ENCODE measurements at regions of chr7 and their contacts with region 1.

Region 1: GRCh38 chr7:13904007-13904406 is 85.5 kb downstream of the ETV1 start:
- DNase-seq: no peak
- H3K4me3 ChIP-seq: no peak overlapping the region
- H3K27ac ChIP-seq: no peak overlapping the region
- H3K4me1 ChIP-seq: no peaks in the 10 kb centered on the region
- H3K27me3 ChIP-seq: no peaks in the 10 kb centered on the region
- CTCF ChIP-seq: no peak
- POLR2A ChIP-seq: no peak

Region 2: DNA sequence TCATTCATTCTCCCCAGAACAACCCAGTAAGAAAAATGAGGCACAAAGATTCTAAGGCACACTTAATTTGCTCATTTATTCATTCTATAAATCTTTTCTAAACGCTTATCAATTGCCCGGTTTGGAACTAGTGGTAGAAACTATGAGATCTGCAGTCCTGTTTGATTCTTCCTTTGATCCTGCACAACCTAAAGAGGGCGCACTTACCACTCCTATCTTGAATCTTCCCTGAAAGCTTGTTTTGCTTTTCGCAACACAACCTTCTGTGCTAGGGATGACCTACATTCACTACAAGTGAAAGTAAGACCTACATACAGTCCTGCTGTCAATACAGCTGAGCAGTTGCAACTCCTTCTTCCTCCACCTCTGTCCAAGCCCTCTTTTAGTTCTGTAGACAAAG is 1229.2 kb before region 1 on chr7:
- intact Hi-C with region 1: loop called (anchors 5 kb)
- DNase-seq: no peak
- H3K4me3 ChIP-seq: no peak overlapping the region
- H3K27ac ChIP-seq: no peak overlapping the region
- H3K4me1 ChIP-seq: no peaks in the 10 kb centered on the region
- H3K27me3 ChIP-seq: no peaks in the 10 kb centered on the region
- CTCF ChIP-seq: peak in 1 of 3 donors; percentile 13
- POLR2A ChIP-seq: no peak

Region 3: DNA sequence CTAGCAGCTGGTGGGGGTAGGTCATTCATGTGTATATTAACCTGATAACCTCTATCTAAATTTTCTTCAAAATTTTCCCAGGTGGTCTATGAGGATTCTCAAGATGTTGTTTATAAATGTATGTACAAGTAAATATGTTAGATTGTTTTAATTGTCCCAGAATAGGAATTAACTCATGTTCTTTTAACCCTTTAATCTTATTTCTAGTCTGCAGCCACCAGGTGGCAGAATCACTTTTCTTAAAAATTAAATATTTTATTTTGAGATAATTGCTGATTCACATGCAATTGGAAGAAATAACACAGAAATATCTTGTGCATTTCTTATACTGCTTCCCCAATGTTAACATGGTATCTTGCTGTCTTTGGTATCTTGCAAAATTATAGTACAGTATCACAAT is 627.0 kb before region 1 on chr7:
- intact Hi-C with region 1: no loop called
- DNase-seq: no peak
- H3K4me3 ChIP-seq: no peak overlapping the region
- H3K27ac ChIP-seq: no peak overlapping the region
- H3K4me1 ChIP-seq: no peaks in the 10 kb centered on the region
- H3K27me3 ChIP-seq: no peaks in the 10 kb centered on the region
- CTCF ChIP-seq: no peak
- POLR2A ChIP-seq: no peak

Region 4: GRCh38 chr7:15389073-15389472 is 1485.1 kb after region 1 on chr7:
- intact Hi-C with region 1: no loop called
- DNase-seq: no peak
- H3K4me3 ChIP-seq: no peak overlapping the region
- H3K27ac ChIP-seq: no peak overlapping the region
- H3K4me1 ChIP-seq: no peaks in the 10 kb centered on the region
- H3K27me3 ChIP-seq: no peaks in the 10 kb centered on the region
- CTCF ChIP-seq: no peak
- POLR2A ChIP-seq: no peak

Measured in breast epithelium (tissue), 4 donors.